ENCODE measurements at regions of chr20 and their contacts with region 1.

Region 1: GRCh38 chr20:21719592-21720214 is 14.2 kb downstream of the PAX1 start:
- ATAC-seq: peak in 3 of 8 experiments; percentile 39 to 57 (median 56)
- H3K4me3 ChIP-seq: no peak overlapping the region
- H3K27ac ChIP-seq: no peak overlapping the region
- H3K4me1 ChIP-seq: no peaks in the 10 kb centered on the region

Region 2: GRCh38 chr20:21918398-21918797 is 198.7 kb after region 1 on chr20:
- in situ Hi-C with region 1: no loop called
- ATAC-seq: no peak
- H3K4me3 ChIP-seq: no peak overlapping the region
- H3K27ac ChIP-seq: no peak overlapping the region
- H3K4me1 ChIP-seq: no peaks in the 10 kb centered on the region

Region 3: GRCh38 chr20:21981597-21982344 is 262.1 kb after region 1 on chr20:
- in situ Hi-C with region 1: no loop called
- ATAC-seq: no peak
- H3K4me3 ChIP-seq: no peak overlapping the region
- H3K27ac ChIP-seq: no peak overlapping the region
- H3K4me1 ChIP-seq: no peaks in the 10 kb centered on the region

Region 4: DNA sequence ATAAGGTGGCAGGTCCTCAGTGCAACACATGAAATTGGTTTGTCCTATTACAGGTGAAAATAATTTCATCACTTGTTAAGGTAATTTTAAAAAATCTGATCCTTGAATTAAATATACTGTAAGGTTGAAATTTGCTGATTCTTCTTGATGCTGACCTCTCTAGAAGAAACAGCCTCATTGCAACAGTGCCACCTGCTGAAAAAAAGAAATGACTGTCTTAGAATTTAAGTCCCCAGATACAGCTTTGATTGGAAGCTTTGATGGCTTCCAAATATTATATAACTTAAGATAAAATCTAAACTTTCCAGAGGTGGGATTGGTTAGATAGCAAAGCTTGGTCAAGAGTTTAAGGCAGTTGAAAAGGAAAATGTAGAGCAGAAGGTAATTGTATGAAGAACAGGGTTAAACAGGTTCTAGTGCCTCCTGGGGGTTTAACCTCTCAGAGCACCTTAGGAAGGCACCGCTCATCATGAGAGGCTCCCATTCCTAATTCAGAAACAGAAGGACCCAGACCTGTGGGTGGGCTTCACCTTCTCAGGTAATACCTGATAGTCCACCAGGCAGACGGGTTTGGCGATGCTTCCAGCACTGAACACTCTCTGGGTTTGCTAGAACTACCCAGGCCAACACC is 386.7 kb after region 1 on chr20:
- in situ Hi-C with region 1: loop called in 1 of 9 experiments (anchors 25 kb)
- ATAC-seq: no peak
- H3K4me3 ChIP-seq: no peak overlapping the region
- H3K27ac ChIP-seq: no peak overlapping the region
- H3K4me1 ChIP-seq: no peaks in the 10 kb centered on the region

Region 5: GRCh38 chr20:22248051-22248667 is 528.5 kb after region 1 on chr20:
- in situ Hi-C with region 1: loop called in 1 of 9 experiments (anchors 25 kb)
- ATAC-seq: peak in 1 of 8 experiments; percentile 37
- H3K4me3 ChIP-seq: no peak overlapping the region
- H3K27ac ChIP-seq: no peak overlapping the region
- H3K4me1 ChIP-seq: no peaks in the 10 kb centered on the region

Region 6: DNA sequence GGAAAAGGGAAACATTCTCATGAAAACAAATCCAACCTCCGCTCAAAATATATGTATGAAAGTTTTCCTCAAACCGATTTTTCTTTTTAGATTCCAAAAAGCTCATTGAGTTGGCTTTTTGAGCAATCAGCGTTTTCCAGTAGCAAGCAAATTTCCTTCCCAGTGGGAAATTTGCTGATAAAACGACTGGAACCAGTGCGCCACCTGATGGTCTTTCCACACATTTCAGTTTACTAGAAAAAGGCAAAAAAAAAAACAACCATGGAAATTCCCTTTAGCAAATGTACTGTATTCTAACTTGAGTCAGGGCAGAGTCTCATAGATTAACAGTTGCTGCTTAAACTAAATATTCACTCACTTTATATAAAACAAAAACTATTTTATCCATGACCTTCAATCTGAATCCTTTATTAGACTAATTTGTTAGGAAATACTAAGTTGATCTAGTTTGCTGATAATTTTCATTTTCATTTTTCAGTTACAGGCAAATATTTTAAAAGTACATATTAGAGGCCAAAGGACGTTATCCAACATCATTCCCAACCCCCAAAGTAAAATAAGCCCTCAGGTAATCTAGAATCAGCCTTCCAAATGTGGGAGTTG is 593.1 kb after region 1 on chr20:
- in situ Hi-C with region 1: loop called in 1 of 9 experiments (anchors 25 kb)
- ATAC-seq: peak in 1 of 8 experiments; percentile 32
- H3K4me3 ChIP-seq: no peak overlapping the region
- H3K27ac ChIP-seq: no peak overlapping the region
- H3K4me1 ChIP-seq: no peaks in the 10 kb centered on the region

Measured in motor neuron (in vitro differentiated cells).